ENCODE measurements at regions of chr1 and their contacts with region 1.

Region 1: DNA sequence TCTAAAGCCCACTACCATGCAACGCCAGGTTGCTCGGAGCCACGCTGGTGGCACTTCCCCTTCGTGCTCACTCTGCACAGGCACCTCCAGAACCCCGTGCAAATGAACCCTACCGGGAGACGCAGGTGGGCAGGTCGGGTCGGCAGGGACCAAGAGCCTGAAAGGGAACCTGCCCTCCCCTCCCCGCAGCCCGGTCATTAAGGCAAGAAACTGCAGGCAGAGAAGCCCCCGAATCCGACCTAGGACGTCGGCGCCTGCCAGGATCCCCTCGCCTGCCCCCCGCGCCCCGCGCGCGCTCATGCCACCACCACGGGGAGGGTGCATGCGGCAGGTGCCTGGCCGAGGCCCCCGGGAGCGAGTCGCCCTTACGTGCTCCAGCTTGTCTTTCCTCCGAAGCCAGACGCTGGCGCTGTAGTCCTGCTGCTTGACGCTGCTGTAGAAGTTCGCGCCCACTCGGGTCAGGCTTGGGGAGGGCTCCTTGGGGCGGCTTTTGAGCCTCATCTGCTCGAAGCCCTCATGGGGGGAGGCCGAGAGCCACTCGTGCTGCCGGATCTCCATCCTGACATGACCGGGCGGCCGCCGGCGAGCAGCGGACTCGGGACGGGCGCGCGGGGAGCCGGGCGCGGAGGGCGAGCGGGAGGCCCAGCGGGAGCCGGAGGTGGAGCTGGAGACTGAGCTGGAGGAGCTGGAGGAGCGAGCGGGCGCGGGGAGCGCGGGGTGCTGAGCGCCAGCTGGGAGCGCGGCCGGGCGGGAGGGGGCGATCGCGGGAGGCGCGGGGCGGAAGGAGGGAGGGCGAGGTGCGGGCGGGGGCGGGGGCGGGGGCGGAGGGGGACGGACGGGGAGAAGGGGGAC is 552 bp downstream of the PLD5 start:
- DNase-seq: peak; percentile 51
- ATAC-seq: peak; percentile 50
- H3K4me3 ChIP-seq: peak overlapping the region; percentile 21 to 60 (median 54)
- H3K4me3 Mint-ChIP-seq: peak overlapping the region; percentile 84
- H3K27ac ChIP-seq: no peak overlapping the region
- H3K27ac Mint-ChIP-seq: no peak overlapping the region
- H3K4me1 ChIP-seq: peaks cover 23 to 24% of the 10 kb centered on the region in 2 donors
- H3K4me1 Mint-ChIP-seq: peaks cover 23% of the 10 kb centered on the region
- H3K27me3 ChIP-seq: peaks cover 0 to 28% (median 13%) of the 10 kb centered on the region in 4 experiments
- H3K27me3 Mint-ChIP-seq: peaks cover 61% of the 10 kb centered on the region
- CTCF ChIP-seq: no peak

Region 2: DNA sequence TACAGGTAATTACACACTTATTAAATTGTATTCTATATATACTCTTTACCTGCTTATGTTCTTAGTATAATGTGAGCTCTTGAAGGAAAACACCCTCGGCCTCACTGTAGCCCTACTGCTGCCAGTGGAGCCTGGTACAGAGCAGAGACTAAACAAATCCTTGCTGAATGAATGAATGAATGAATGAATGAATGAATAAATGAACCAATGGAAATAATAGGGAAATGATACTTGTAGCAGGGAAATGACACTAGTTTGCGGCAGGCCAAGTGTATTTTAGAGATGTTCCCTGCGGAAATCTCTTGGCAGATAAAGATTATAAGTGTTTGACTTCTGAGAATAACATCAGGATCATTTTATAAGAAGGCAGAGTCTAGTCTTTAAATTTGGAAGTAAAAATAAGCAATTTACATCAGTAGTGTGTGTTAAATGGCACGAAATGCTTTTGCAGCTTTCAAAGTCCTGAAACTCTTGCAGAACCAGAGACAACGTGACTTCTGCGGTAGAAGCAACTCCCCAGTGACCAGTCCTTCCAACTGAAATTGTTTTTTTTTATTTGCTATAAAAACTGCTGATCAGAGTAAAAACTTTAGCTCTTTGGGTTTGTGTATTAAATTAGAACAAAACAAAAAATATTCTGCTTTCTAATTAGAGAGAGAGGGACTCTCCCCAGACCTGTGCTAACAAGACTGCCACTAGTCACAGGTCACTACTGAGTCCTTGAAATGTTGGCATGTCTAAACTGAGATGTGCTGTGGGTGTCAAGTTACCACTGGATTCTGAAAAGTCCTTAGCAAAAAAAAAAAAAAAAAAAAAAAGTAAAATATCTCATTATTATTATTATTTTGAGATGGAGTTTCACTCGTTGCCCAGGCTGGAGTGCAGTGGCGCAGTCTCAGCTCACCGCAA is 325.8 kb before region 1 on chr1:
- CTCF ChIA-PET with region 1: no interaction called
- POLR2A ChIA-PET with region 1: no interaction called
- intact Hi-C with region 1: no loop called
- DNase-seq: no peak
- ATAC-seq: no peak
- H3K4me3 ChIP-seq: no peak overlapping the region
- H3K4me3 Mint-ChIP-seq: no peak overlapping the region
- H3K27ac ChIP-seq: no peak overlapping the region
- H3K27ac Mint-ChIP-seq: no peak overlapping the region
- H3K4me1 ChIP-seq: no peaks in the 10 kb centered on the region
- H3K4me1 Mint-ChIP-seq: no peaks in the 10 kb centered on the region
- H3K27me3 ChIP-seq: no peaks in the 10 kb centered on the region
- H3K27me3 Mint-ChIP-seq: no peaks in the 10 kb centered on the region
- CTCF ChIP-seq: no peak

Region 3: GRCh38 chr1:242784074-242784473 is 260.1 kb after region 1 on chr1:
- CTCF ChIA-PET with region 1: no interaction called
- POLR2A ChIA-PET with region 1: no interaction called
- intact Hi-C with region 1: loop called (anchors 5 kb)
- DNase-seq: peak; percentile 71
- ATAC-seq: peak; percentile 84
- H3K4me3 ChIP-seq: peak overlapping the region in 2 of 5 experiments; percentile 5 to 45
- H3K4me3 Mint-ChIP-seq: peak overlapping the region; percentile 73
- H3K27ac ChIP-seq: peak overlapping the region; percentile 89
- H3K27ac Mint-ChIP-seq: peak overlapping the region; percentile 99
- H3K4me1 ChIP-seq: peaks cover 64 to 65% of the 10 kb centered on the region in 2 donors
- H3K4me1 Mint-ChIP-seq: peaks cover 57% of the 10 kb centered on the region
- H3K27me3 ChIP-seq: no peaks in the 10 kb centered on the region
- H3K27me3 Mint-ChIP-seq: no peaks in the 10 kb centered on the region
- CTCF ChIP-seq: no peak